ENCODE measurements at regions of chr20 and their contacts with region 1.

Region 1: GRCh38 chr20:10668677-10669368 is 5.0 kb downstream of the JAG1 start:
- DNase-seq: no peak
- ATAC-seq: no peak
- H3K4me3 ChIP-seq: no peak overlapping the region
- H3K27ac ChIP-seq: no peak overlapping the region
- H3K4me1 ChIP-seq: peaks cover 25% of the 10 kb centered on the region
- H3K27me3 ChIP-seq: no peaks in the 10 kb centered on the region
- CTCF ChIP-seq: no peak

Region 2: GRCh38 chr20:10453241-10453640 is 215.6 kb before region 1 on chr20:
- CTCF ChIA-PET with region 1: no interaction called
- POLR2A ChIA-PET with region 1: no interaction called
- intact Hi-C with region 1: no loop called
- DNase-seq: no peak
- ATAC-seq: no peak
- H3K4me3 ChIP-seq: no peak overlapping the region
- H3K27ac ChIP-seq: no peak overlapping the region
- H3K4me1 ChIP-seq: 0 out of 2 replicates have a peak, but pooled peaks cover 7% of the 10 kb centered on the region
- H3K27me3 ChIP-seq: no peaks in the 10 kb centered on the region
- CTCF ChIP-seq: no peak

Region 3: DNA sequence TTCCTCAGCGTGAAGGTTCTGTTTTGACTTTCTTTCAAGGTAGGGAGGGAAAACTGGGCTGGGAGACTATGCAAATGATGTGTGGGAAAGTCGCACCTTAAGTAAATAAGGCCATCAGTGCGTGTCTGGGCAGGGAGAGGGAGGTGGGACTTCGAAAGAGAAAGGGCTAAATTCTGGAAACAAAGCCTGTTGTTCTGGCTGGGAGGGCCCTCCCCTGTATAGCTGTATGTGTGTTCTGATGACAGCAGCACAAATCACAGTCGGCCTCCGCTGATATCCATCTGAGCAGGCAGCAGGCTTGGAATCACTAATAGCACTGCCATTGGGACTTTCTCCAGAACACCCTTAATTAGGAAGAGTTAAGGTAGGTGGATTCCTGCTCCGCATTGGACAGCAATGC is 14.2 kb before region 1 on chr20:
- CTCF ChIA-PET with region 1: interaction called, 3 read pairs
- POLR2A ChIA-PET with region 1: interaction called, 10 read pairs
- intact Hi-C with region 1: no loop called
- DNase-seq: no peak
- ATAC-seq: peak; percentile 23
- H3K4me3 ChIP-seq: no peak overlapping the region
- H3K27ac ChIP-seq: peak overlapping the region; percentile 66
- H3K4me1 ChIP-seq: peaks cover 17% of the 10 kb centered on the region
- H3K27me3 ChIP-seq: no peaks in the 10 kb centered on the region
- CTCF ChIP-seq: no peak